Tibial artery (tissue), 4 donors: ENCODE measurements at regions of chr15 and their contacts with region 1.

Region 1: DNA sequence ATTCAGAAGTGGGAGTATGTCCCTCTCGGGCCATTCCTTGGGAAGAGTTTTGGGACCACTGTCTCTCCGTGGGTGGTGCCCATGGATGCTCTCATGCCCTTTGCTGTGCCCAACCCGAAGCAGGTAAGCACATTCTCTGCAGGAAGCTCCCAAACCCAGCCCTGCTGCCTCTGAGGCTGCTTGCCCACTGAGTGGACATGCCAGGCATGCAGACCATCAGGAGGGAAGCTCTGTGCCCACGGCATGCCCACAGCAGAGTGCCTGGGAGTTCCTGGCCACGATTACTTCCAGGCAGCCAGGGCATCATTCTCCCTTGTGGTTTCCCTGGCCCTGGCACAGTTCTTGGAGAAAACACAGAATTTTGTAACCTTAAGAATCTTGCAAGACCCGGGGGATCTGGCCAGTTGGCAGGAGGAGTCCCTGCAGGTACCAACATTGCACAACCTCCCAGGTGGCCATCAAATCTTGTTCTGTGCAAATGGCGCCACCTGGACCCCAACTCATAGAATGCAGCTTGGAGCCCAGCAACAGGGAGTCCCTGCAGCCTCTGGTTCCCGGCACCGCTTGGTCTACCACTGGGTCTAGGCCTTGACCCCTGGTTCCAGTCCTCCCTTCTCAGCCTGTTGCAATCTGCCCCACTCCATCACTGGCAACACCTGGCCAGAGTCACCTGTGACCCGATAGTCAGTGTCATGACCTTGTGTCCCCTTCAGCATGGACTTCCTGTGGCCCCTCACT is 20.4 kb downstream of the FAH start:
- DNase-seq: peak; percentile 76 to 88
- H3K4me3 ChIP-seq: no peak overlapping the region
- H3K27ac ChIP-seq: peak overlapping the region; percentile 92
- H3K4me1 ChIP-seq: peaks cover 0 to 39% (median 32%) of the 10 kb centered on the region in 4 donors
- H3K27me3 ChIP-seq: no peaks in the 10 kb centered on the region
- CTCF ChIP-seq: peak; percentile 64 to 69

Region 2: DNA sequence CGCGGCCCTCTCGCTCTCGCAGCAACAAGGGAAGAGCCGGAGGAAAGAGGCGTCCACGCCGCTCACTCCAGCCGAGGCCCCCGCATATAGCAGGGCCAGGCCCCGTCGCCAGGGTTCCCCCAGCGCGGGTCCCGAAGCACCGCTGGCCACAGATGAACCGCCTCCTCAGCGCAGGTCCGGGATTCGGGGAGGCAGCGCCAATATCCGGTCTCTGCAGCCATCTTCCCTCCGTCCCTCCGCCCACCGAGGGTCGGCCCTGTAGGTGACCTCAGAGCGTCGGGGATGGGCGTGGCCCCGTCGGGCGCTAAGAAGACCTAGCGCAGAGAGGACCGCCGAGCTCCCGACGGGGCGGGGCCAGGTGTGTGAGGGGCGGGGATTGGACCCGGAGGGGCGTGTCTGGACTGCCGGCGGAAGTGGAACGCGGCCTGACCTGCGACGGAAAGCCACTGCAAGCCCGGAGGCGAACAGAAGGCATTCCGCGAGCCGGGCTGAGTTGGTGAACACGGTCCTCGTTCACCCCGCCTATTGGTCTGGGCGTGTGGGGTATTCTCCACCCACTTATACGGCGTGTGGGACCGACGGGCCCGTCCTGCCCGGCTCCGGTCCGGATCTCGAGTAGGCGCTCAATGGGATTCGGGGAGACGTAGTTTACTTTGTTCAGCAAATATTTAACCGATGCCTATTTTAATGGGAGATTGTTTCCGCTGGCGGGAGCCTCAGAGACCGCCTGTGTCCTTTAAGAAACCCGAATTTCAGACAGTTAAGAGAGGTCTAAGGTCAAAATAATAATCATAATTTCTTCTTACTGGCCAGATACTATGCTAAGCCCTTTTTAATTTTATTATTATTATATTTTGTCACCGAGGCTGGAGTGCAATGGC is 249.4 kb before region 1 on chr15:
- intact Hi-C with region 1: loop called (anchors 10 kb)
- DNase-seq: peak; percentile 89 to 96
- H3K4me3 ChIP-seq: peak overlapping the region; percentile 74 to 83
- H3K27ac ChIP-seq: peak overlapping the region; percentile 90 to 91
- H3K4me1 ChIP-seq: peaks cover 0 to 12% (median 8%) of the 10 kb centered on the region in 4 donors
- H3K27me3 ChIP-seq: no peaks in the 10 kb centered on the region
- CTCF ChIP-seq: peak in 1 of 2 experiments; percentile 4

Region 3: GRCh38 chr15:79994615-79995014 is 178.6 kb before region 1 on chr15:
- intact Hi-C with region 1: no loop called
- DNase-seq: no peak
- H3K4me3 ChIP-seq: no peak overlapping the region
- H3K27ac ChIP-seq: no peak overlapping the region
- H3K4me1 ChIP-seq: no peaks in the 10 kb centered on the region
- H3K27me3 ChIP-seq: no peaks in the 10 kb centered on the region
- CTCF ChIP-seq: no peak

Region 4: DNA sequence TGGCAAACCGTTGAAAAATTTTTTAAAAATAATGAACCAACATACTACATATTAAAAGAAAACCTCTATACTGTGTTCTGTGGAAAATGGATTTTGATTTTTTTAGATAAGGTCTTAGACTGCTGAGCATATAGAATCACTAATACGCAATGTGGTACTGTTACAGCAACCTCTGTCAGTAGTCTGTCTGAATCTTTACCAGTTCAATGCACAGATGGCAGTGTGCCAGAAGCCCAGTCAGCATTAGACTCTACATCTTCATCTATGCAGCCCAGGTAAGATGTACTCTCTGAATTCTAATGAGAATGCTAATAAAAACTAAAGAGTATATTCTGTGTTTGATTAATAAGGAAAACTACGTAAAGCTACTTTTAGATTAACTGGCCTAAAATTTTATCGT is 51.6 kb before region 1 on chr15:
- intact Hi-C with region 1: no loop called
- DNase-seq: no peak
- H3K4me3 ChIP-seq: no peak overlapping the region
- H3K27ac ChIP-seq: no peak overlapping the region
- H3K4me1 ChIP-seq: no peaks in the 10 kb centered on the region
- H3K27me3 ChIP-seq: no peaks in the 10 kb centered on the region
- CTCF ChIP-seq: no peak

Region 5: DNA sequence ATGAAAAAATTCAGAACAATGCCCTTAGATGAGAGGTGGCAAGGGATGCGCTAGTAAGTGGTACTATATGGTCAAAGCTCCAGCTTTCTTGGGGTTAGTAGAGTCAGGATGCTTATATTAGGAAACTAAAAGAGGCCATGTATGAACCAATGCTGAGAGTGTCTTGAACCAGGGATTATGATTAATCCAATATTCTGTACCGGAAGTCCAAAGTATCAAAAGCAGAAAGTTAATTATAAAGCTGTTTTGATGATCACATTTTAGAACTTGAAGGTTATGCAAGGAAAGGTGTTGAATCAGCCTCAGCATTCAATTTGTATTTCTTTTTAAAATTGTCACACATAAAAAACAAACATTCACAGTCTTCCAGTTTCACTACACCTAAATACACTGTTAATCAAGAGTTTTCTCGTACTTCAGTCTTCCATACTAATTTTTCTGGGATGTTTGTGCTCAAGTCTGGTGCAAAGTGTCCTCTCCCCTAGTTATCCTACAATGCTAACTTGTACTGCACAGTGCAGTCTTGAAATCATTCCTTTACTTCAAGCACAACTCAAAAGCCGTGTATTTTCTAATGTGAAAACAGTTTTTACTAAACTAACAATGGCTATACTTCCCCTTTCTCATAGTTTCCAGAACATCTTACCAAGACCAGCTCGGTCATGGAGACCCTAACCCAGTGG is 31.1 kb before region 1 on chr15:
- intact Hi-C with region 1: no loop called
- DNase-seq: no peak
- H3K4me3 ChIP-seq: no peak overlapping the region
- H3K27ac ChIP-seq: no peak overlapping the region
- H3K4me1 ChIP-seq: no peaks in the 10 kb centered on the region
- H3K27me3 ChIP-seq: no peaks in the 10 kb centered on the region
- CTCF ChIP-seq: no peak

Region 6: GRCh38 chr15:80404057-80404715 is 231.0 kb after region 1 on chr15 and contains the start of gene ARNT2:
- intact Hi-C with region 1: no loop called
- DNase-seq: peak in 1 of 2 donors; percentile 69
- H3K4me3 ChIP-seq: peak within 1 kb of the TSS; percentile 62 to 72
- H3K27ac ChIP-seq: peak within 1 kb of the TSS; percentile 84 to 86
- H3K4me1 ChIP-seq: peaks cover 0 to 46% (median 21%) of the 10 kb centered on the region in 4 donors
- H3K27me3 ChIP-seq: no peaks in the 10 kb centered on the region
- CTCF ChIP-seq: no peak